ENCODE measurements at regions of chr10 and their contacts with region 1.

Region 1: GRCh38 chr10:17216217-17216900 is 11.7 kb upstream of the VIM start:
- DNase-seq: peak; percentile 47
- H3K4me3 Mint-ChIP-seq: peak overlapping the region; percentile 36
- H3K27ac Mint-ChIP-seq: peak overlapping the region; percentile 95
- H3K4me1 Mint-ChIP-seq: peaks cover 62% of the 10 kb centered on the region
- H3K27me3 Mint-ChIP-seq: no peaks in the 10 kb centered on the region

Region 2: DNA sequence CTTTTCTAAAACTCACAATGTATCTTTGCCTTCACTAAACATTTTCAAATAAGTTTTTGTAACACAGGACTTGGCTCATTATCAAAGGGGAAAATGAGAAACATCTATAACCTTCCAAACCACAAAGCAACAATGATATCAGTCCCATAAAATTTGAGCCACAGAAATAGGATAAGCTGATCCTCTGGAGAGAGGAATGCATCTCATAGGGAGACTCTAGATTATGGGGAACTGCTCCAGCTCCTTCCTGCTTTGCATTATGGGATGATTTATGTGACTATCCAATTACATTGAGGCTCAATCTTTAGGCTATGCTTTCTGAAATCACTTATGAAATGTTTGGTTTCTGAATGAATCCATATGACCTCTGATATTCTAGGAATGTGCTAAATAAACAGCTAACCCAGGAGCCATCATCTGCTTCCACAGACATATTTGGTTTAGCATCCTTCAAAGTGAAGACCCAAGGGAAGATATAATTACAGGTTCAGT is 157.1 kb before region 1 on chr10:
- CTCF ChIA-PET with region 1: no interaction called
- POLR2A ChIA-PET with region 1: no interaction called
- DNase-seq: no peak
- H3K4me3 Mint-ChIP-seq: no peak overlapping the region
- H3K27ac Mint-ChIP-seq: no peak overlapping the region
- H3K4me1 Mint-ChIP-seq: peaks cover 4% of the 10 kb centered on the region
- H3K27me3 Mint-ChIP-seq: no peaks in the 10 kb centered on the region

Region 3: GRCh38 chr10:17200912-17201793 is 15.2 kb before region 1 on chr10 and contains the start of gene TRDMT1:
- CTCF ChIA-PET with region 1: interaction called, 9 read pairs
- POLR2A ChIA-PET with region 1: interaction called, 45 read pairs
- DNase-seq: peak; percentile 77
- H3K4me3 Mint-ChIP-seq: peak within 1 kb of the TSS; percentile 92
- H3K27ac Mint-ChIP-seq: peak within 1 kb of the TSS; percentile 80
- H3K4me1 Mint-ChIP-seq: peaks cover 57% of the 10 kb centered on the region
- H3K27me3 Mint-ChIP-seq: no peaks in the 10 kb centered on the region
- total RNA-seq, gene TRDMT1: 12.3 to 12.7 TPM

Region 4: DNA sequence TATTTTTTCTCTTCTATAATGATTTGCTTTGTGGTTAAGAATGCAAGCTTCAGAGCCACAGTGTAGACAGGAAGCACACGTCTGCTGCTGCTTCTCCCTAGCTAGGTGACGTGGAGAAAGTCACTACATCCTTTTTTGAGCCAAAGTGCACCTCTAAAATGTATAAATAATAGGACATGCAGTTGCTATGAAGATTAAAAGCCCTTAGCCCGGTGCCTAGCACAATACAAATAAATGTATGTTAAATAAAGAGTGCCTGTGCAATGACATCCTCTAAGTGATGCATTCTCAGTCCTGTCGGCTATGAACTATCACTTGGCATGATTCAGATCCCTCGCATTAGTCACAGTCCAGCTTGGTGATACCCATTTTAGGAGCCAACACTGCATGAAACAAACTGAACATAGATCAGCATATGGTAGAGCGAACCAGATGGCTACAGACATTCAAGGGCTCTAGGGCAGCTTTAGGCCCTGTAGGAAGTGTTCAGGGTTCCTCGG is 10.1 kb before region 1 on chr10:
- CTCF ChIA-PET with region 1: interaction called, 9 read pairs
- POLR2A ChIA-PET with region 1: interaction called, 45 read pairs
- DNase-seq: peak; percentile 44
- H3K4me3 Mint-ChIP-seq: peak overlapping the region; percentile 31
- H3K27ac Mint-ChIP-seq: peak overlapping the region; percentile 77
- H3K4me1 Mint-ChIP-seq: peaks cover 57% of the 10 kb centered on the region
- H3K27me3 Mint-ChIP-seq: no peaks in the 10 kb centered on the region

Region 5: GRCh38 chr10:17233286-17233991 is 17.1 kb after region 1 on chr10:
- CTCF ChIA-PET with region 1: interaction called, 13 read pairs
- POLR2A ChIA-PET with region 1: interaction called, 117 read pairs
- DNase-seq: no peak
- H3K4me3 Mint-ChIP-seq: peak overlapping the region; percentile 30
- H3K27ac Mint-ChIP-seq: no peak overlapping the region
- H3K4me1 Mint-ChIP-seq: peaks cover 57% of the 10 kb centered on the region
- H3K27me3 Mint-ChIP-seq: no peaks in the 10 kb centered on the region